Dorsolateral prefrontal cortex (tissue), 120 donors: ENCODE measurements at regions of chr4 and their contacts with region 1.

Region 1: DNA sequence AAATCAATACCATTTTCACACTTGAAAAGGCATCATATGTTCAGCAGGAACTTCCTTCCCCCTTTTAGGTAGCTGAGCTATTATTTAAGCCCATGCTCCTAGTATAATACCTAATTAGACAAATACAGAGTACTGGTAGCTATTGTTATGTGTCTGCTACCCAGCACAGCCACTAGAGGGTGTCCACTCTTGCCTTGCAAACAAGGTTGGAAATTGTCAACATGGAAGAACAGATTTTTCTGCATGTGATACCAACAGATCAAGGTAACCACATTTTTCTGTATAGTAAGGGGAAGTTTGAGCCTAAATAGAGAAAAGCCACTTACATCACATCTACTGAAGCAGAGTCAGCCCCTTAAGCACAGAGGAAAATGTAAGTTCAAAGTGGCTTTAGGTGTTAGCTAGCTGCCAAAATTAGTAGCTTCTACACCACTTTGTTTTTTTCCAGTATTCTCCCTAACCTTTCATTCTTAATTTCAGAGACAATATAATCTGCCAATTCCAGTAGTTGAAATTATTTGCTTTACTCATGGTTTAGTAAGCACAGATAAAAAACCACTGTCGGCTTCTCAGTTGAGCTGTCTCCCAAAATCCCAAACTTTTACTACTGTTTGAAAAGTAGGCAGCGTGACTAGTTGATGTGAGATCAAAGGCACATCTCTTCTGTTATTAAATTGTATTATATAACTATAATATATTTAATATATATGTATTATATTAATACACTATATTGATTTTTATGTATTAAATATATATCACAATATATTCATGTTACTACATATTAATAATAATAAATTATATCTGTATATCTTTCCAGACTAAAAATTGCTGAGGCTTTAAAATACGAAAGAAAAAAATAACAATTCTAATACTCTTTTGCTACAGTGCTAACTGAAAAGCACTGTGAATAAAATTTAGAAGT is 38.2 kb downstream of the EDNRA start:
- DNase-seq: peak in 7 of 10 donors; percentile 14 to 81 (median 52)
- H3K4me3 ChIP-seq: no peak overlapping the region
- H3K27ac ChIP-seq: no peak overlapping the region
- H3K27me3 ChIP-seq: no peaks in the 10 kb centered on the region
- CTCF ChIP-seq: peak; percentile 61 to 94 (median 80)

Region 2: DNA sequence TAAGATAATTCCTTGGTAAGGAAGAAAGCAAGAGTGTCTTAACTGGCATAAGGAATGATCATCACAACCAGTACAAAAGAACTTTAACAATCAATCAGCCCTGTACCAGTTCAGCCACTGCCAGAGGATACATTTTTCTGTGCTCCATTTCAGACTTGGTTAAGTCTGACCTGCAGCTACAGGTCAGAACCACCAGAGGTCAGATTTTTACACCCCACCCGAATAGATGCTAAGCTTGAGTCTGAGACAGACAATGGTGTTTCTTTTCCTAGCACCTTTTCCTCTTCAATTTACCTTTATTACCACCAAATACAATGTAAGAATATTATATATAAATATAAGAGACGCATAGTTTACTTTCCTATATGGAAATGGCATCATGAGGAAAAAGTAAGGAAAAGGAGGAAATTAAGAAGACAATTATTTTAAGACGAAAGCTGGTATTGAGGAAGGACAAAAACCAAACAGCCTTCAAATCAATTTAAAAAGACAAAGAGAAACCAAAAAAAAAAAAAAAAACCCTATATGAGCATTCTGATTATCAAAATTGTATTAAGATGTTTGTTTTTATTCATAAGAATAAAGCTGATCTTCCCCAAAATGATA is 358.1 kb before region 1 on chr4:
- intact Hi-C with region 1: loop called in 1 of 2 experiments (anchors 10 kb)
- DNase-seq: peak in 1 of 10 donors; percentile 25
- H3K4me3 ChIP-seq: no peak overlapping the region
- H3K27ac ChIP-seq: no peak overlapping the region
- H3K27me3 ChIP-seq: no peaks in the 10 kb centered on the region
- CTCF ChIP-seq: peak; percentile 45 to 83 (median 72)

Region 3: DNA sequence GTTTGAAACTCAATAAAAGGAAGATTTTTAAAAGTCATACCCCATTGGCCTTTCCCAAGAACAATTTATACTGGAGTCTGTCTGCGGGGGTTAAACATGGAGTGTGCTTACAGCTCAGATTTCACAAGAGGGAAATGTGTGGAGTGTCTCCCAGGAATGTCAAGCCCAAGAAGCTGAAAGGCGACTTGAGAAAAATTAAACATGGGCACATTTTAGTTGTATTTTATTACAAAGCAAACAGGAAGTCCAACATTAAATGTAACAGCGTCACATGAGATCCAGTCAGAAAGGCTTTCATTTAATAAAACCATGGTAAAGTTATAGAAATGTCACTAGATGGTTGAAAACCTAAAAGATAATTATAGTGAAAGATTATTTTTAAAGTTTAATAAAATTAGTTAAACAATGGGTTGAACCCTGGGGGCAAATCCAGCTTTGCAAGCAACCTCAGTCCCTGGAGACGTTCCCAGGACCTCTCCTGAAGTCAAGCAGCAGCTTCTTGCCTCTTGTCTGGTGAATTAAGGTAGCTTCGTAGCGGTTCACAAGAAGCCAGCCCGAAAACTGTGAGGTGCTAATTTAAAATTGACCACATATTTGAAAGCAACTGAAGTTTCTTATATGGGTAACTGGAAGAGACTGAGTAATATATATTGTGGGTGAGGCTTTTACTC is 206.6 kb before region 1 on chr4:
- intact Hi-C with region 1: no loop called
- DNase-seq: no peak
- H3K4me3 ChIP-seq: no peak overlapping the region
- H3K27ac ChIP-seq: no peak overlapping the region
- H3K27me3 ChIP-seq: no peaks in the 10 kb centered on the region
- CTCF ChIP-seq: no peak

Region 4: DNA sequence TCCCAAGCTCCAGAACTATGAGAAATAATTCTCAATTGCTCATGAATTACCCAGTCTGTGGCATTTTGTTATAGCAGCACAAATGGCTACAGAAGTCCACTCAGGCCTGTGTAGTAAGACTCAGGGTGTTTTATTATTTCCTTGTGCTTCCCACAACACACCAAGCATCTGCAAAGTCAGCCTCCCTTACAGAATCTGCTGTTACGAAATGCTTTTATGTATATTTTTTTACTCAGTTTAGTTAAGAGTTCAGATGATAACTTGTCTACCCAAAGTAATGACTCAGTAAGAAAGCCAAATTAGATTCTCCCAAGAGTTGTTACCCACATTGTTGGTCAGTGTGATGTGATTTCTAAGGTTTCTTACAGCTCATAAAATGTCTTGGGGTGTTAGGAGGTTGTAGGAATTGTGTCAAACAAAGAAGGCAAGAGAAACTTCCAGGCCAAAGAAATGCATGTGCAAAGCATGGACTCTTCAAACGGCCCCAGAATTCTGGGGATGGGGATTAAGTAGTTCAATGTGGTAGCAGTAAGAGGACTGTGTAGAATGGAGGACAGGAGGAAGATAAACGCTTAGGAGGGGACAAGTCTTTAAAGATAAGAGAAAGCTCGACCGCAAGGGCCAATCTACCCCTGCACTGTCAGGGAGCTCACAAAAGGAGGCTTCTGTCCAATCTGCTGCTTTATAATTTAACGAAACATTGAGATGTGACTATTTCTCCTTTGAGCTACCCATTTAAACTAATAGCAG is 62.7 kb after region 1 on chr4:
- intact Hi-C with region 1: loop called in 1 of 2 experiments (anchors 5 kb)
- DNase-seq: no peak
- H3K4me3 ChIP-seq: no peak overlapping the region
- H3K27ac ChIP-seq: no peak overlapping the region
- H3K27me3 ChIP-seq: no peaks in the 10 kb centered on the region
- CTCF ChIP-seq: no peak

Region 5: DNA sequence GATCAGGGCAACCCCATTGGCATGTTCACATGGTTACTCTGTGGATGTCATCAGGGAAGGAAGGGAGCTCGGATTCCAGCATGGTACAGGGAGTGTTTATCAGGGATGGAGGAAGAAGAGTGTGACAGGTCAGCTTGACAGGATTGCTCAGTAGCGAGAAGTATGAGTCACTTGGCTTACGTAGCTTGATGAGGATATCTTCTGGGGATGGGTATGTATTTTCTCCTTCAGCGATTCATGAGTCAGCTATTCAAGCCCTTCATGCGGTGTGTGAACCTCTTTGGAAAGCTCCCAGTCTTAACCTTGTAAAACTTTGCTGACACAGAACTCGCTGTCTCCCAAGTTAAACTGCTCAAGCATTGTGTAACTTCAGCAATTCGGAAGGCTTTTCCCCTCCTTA is 488.2 kb after region 1 on chr4:
- intact Hi-C with region 1: no loop called
- DNase-seq: no peak
- H3K4me3 ChIP-seq: no peak overlapping the region
- H3K27ac ChIP-seq: peak overlapping the region in 3 of 59 donors; percentile 2 to 37 (median 19)
- H3K27me3 ChIP-seq: no peaks in the 10 kb centered on the region
- CTCF ChIP-seq: no peak